Gastrocnemius medialis (tissue), 4 donors: ENCODE measurements at regions of chr3 and their contacts with region 1.

Region 1: DNA sequence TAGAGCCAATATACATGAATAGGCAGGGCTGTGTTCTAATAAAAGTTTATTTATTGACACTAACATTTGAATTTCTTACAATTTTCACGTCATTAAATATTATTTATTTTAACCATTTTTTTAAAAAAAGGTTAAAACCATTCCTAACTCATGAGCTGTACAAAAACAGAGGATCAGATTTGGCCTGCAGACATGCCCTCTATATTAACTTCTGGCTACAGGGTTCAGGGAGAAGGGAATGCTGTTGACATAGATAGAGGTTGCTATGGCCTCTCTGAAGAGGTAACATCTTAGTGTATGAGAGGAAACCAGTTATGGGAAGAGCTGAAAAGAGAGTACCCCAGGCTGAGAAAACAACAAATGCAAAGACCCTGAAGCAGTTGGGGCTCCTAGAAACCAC is 19.1 kb upstream of the RAP2B start:
- DNase-seq: no peak
- ATAC-seq: no peak
- H3K4me3 ChIP-seq: no peak overlapping the region
- H3K27ac ChIP-seq: no peak overlapping the region
- H3K4me1 ChIP-seq: no peaks in the 10 kb centered on the region
- H3K27me3 ChIP-seq: no peaks in the 10 kb centered on the region
- CTCF ChIP-seq: no peak
- POLR2A ChIP-seq: no peak

Region 2: DNA sequence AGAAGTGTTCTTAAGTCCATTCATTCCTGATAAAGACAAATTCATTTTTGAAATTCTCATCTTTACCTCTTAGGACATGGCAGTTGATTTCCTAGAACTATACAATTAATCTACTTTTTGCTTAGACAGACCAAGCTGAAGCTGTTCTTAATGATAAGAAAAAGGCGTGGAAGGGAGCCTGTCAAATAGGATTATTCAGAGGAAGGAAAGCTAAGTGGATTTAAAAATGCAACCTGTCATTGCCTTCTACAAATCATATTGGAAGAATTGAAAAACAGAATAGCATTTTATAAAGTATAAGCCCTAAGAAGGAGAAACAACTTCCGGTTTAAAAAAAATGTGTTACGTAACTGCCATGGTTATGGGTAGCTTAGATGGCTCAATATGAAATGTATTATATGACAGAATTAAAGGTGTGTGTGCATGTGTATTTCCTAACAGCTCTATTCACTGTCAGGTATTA is 62.2 kb before region 1 on chr3:
- in situ Hi-C with region 1: no loop called
- intact Hi-C with region 1: no loop called
- DNase-seq: no peak
- ATAC-seq: no peak
- H3K4me3 ChIP-seq: no peak overlapping the region
- H3K27ac ChIP-seq: no peak overlapping the region
- H3K4me1 ChIP-seq: no peaks in the 10 kb centered on the region
- H3K27me3 ChIP-seq: no peaks in the 10 kb centered on the region
- CTCF ChIP-seq: no peak
- POLR2A ChIP-seq: no peak

Region 3: DNA sequence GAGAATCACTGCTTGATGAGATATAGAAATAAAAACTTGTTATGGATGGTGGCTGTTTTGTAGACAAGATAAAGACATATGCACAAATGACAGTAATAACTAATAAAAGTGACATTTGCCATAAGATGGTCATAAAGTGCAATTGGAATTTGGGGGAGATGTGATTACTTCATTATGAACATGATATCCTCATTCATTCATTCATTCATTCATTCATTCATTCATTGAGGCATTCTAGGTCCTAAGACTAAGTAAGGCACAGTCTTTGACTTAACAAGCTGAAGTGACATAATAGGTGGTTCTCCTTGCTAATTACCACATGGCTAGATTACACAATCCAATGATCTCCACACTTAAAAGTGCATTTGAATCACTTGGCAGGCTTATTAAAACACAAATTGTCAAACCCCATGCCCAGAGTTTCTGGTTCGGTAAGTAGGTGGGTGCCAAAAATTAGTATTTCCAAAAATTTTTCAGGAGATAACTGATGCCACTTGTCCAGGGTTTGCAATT is 38.0 kb after region 1 on chr3:
- in situ Hi-C with region 1: no loop called
- intact Hi-C with region 1: loop called (anchors 2 kb)
- DNase-seq: no peak
- ATAC-seq: no peak
- H3K4me3 ChIP-seq: no peak overlapping the region
- H3K27ac ChIP-seq: no peak overlapping the region
- H3K4me1 ChIP-seq: no peaks in the 10 kb centered on the region
- H3K27me3 ChIP-seq: no peaks in the 10 kb centered on the region
- CTCF ChIP-seq: no peak
- POLR2A ChIP-seq: no peak